ENCODE measurements at regions of chr1 and their contacts with region 1.

Region 1: GRCh38 chr1:39354572-39354971 is 136.9 kb upstream of the BMP8A start:
- DNase-seq: no peak
- ATAC-seq: no peak
- H3K4me3 ChIP-seq: no peak overlapping the region
- H3K27ac ChIP-seq: no peak overlapping the region
- H3K4me1 ChIP-seq: peaks cover 3% of the 10 kb centered on the region
- H3K27me3 ChIP-seq: no peaks in the 10 kb centered on the region

Region 2: GRCh38 chr1:39258146-39258924 is 96.2 kb before region 1 on chr1:
- intact Hi-C with region 1: no loop called
- DNase-seq: peak; percentile 50 to 83 (median 71)
- ATAC-seq: peak; percentile 77 to 83
- H3K4me3 ChIP-seq: no peak overlapping the region
- H3K27ac ChIP-seq: peak overlapping the region; percentile 64
- H3K4me1 ChIP-seq: no peaks in the 10 kb centered on the region
- H3K27me3 ChIP-seq: no peaks in the 10 kb centered on the region

Region 3: GRCh38 chr1:39293375-39294070 is 61.0 kb before region 1 on chr1:
- intact Hi-C with region 1: loop called in 1 of 4 experiments (anchors 10 kb)
- DNase-seq: no peak
- ATAC-seq: peak in 1 of 2 donors; percentile 73
- H3K4me3 ChIP-seq: no peak overlapping the region
- H3K27ac ChIP-seq: no peak overlapping the region
- H3K4me1 ChIP-seq: peaks cover 4% of the 10 kb centered on the region
- H3K27me3 ChIP-seq: no peaks in the 10 kb centered on the region

Region 4: GRCh38 chr1:39625462-39626273 is 271.1 kb after region 1 on chr1:
- intact Hi-C with region 1: no loop called
- DNase-seq: peak; percentile 92 to 96 (median 95)
- ATAC-seq: peak; percentile 91 to 94
- H3K4me3 ChIP-seq: no peak overlapping the region
- H3K27ac ChIP-seq: peak overlapping the region; percentile 80
- H3K4me1 ChIP-seq: peaks cover 20% of the 10 kb centered on the region
- H3K27me3 ChIP-seq: no peaks in the 10 kb centered on the region